Sigmoid colon (tissue), 7 donors: ENCODE measurements at regions of chr1 and their contacts with region 1.

Region 1: GRCh38 chr1:232578651-232579195 is 51.2 kb downstream of the SIPA1L2 start:
- DNase-seq: no peak
- H3K4me3 ChIP-seq: no peak overlapping the region
- H3K27ac ChIP-seq: peak overlapping the region; percentile 10 to 64 (median 52)
- H3K4me1 ChIP-seq: peaks cover 0 to 49% (median 21%) of the 10 kb centered on the region in 4 donors
- H3K27me3 ChIP-seq: no peaks in the 10 kb centered on the region
- CTCF ChIP-seq: no peak
- EP300 ChIP-seq: no peak
- POLR2A ChIP-seq: no peak

Region 2: DNA sequence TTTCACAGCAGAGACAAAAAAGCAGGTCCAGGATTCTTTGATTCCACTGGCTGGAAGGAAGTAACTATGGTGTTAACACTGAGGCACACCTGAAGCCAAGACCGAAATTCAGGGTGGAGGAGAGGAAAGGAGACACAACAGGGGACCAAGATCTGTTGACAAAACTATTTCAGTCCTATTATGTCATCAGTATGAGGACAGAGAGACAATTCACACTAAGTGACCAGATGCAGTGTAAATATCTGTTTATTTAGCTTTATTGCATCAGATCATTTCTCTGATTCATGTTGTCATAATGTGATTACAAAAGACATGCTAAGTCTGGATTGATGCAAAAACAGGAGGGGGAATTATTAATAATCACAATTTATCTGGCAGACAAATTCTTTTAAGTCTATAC is 67.6 kb before region 1 on chr1:
- intact Hi-C with region 1: loop called (anchors 5 kb)
- DNase-seq: no peak
- H3K4me3 ChIP-seq: no peak overlapping the region
- H3K27ac ChIP-seq: peak overlapping the region in 3 of 4 donors; percentile 2 to 83 (median 79)
- H3K4me1 ChIP-seq: peaks cover 3 to 38% (median 31%) of the 10 kb centered on the region in 4 donors
- H3K27me3 ChIP-seq: no peaks in the 10 kb centered on the region
- CTCF ChIP-seq: no peak
- EP300 ChIP-seq: no peak
- POLR2A ChIP-seq: no peak

Region 3: GRCh38 chr1:232620356-232620969 is 41.7 kb after region 1 on chr1:
- intact Hi-C with region 1: loop called (anchors 5 kb)
- DNase-seq: peak; percentile 85
- H3K4me3 ChIP-seq: peak overlapping the region in 3 of 4 donors; percentile 2 to 21 (median 5)
- H3K27ac ChIP-seq: peak overlapping the region; percentile 70 to 81 (median 76)
- H3K4me1 ChIP-seq: peaks cover 0 to 41% (median 23%) of the 10 kb centered on the region in 4 donors
- H3K27me3 ChIP-seq: no peaks in the 10 kb centered on the region
- CTCF ChIP-seq: no peak
- EP300 ChIP-seq: peak in 1 of 4 donors; percentile 40
- POLR2A ChIP-seq: no peak